ENCODE measurements at regions of chr11 and their contacts with region 1.

Region 1: DNA sequence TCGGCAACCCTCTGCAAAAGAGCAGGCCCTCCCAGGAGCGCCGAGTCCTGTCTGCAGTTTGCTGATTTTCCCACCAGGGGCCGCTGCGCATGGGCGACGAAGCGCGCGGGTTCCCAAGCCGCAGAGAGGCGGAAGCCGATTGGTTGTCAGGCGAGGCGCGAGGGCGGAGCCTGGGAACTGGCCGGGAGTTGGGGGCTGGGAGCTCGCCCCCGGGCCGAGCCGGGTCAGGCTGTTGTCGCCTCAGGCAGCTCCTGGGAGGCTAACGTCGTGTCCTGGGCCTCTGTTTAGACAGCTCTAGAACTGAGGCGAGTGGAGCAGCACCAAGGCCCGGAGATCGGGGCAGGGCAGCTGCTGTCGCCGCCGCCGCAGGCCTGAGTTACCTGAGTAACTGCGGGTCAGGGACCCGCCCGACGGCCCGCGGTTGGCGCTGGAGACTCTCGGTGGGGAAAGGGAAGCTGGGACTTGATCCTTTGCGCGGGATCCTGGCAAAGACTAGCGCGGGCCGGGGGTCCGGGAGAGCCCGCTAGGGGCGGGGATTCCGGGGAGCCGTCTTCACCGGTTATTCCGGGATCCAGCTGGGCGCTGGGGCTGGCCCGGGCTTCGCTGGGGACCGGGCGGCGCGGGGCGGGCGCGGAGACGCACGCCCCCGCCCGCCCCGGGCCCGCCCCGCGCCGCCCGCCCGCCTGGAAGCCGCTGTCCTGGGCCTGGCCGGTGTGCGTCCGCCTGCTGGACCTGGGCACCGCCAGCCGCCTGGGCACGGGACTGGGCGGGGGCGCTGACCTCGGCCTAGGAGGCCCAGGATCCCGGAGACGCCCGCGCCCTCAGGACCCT is at the start of gene STIM1:
- DNase-seq: peak; percentile 99
- H3K4me3 Mint-ChIP-seq: peak within 1 kb of the TSS; percentile 97
- H3K27ac Mint-ChIP-seq: peak within 1 kb of the TSS; percentile 98
- H3K4me1 Mint-ChIP-seq: peaks cover 55% of the 10 kb centered on the region
- H3K27me3 Mint-ChIP-seq: no peaks in the 10 kb centered on the region
- total RNA-seq, gene STIM1: 62.9 to 68.5 TPM

Region 2: DNA sequence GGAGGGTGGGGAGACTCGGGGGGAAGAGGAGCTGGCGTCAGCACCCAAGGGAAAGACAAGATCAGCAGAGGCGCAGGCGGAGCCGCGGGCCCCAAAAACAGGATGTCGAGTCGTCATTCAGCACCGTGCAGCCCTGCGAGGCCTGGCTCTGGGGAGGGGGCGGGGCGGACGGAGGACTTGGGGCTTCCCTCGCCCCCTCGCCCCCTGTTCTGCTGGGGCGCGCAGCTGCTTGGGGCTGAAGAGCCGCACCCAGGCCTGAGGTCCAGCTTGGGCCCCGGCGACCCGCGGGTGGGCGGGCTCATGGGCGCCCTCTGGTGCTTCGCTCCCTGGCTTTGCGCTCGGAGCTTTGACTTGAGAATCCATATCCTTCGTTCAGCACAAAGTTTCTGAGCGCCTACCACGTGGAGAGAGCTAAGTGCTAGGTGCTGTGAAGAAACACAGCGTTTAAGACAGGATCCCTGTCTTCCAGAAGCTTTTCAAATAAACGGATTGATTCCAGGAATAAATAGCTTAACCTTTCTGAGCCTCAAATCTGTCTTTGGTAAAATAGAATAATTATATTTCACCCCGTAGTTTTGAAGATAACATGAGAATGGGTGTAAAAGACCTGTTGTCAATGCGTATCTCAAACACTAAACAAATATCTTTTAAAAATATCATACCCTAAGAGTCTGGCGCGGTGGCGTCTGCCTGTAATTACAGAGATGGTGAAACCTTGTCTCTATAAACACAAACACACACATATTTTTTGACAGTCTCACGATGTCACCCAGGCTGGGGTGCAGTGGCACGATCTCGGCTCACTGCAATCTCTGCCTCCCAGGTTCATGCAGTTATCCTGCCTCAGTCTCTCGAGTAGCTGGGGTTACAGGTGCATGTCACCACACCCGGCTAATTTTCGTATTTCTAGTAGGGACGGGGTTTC is 13.5 kb before region 1 on chr11:
- CTCF ChIA-PET with region 1: interaction called, 231 read pairs
- intact Hi-C with region 1: loop called (anchors 1 kb)
- DNase-seq: peak; percentile 98
- H3K4me3 Mint-ChIP-seq: peak overlapping the region; percentile 85
- H3K27ac Mint-ChIP-seq: peak overlapping the region; percentile 86
- H3K4me1 Mint-ChIP-seq: peaks cover 50% of the 10 kb centered on the region
- H3K27me3 Mint-ChIP-seq: no peaks in the 10 kb centered on the region

Region 3: GRCh38 chr11:3880724-3881123 is 25.5 kb after region 1 on chr11:
- CTCF ChIA-PET with region 1: interaction called, 30 read pairs
- intact Hi-C with region 1: loop called (anchors 1 kb)
- DNase-seq: no peak
- H3K4me3 Mint-ChIP-seq: no peak overlapping the region
- H3K27ac Mint-ChIP-seq: peak overlapping the region; percentile 37
- H3K4me1 Mint-ChIP-seq: peaks cover 77% of the 10 kb centered on the region
- H3K27me3 Mint-ChIP-seq: no peaks in the 10 kb centered on the region

Region 4: DNA sequence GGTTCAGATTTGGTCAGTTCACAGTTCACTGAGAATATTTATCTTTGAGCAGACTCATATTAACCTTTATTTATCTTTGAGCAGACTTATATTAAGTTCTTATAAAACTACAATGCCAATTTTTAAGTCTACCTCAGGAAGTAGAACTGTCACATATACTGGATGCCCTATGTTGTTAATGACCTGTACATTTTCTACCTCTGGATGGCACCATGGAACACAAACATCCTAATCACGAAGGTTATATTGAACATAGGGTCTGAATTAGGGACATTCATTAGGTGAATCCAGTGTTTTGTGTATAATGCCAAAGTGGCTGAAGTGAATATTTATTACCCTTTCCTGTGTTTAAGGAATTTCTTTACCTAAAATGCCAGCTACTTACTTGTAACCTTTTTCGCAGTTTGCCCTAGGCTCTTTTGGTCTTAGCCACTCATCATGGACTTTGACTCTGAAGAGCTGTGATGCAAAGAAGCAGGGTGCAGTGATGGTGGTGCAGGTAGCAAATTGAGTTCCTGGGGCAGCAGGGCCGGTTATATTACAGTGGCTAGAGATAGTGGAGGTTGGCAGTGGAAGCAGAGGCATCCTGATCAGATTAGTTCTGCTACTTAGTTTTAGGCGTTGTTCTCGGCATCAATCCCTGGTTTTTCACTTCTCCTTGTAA is 72.1 kb after region 1 on chr11:
- CTCF ChIA-PET with region 1: interaction called, 10 read pairs
- intact Hi-C with region 1: no loop called
- DNase-seq: no peak
- H3K4me3 Mint-ChIP-seq: no peak overlapping the region
- H3K27ac Mint-ChIP-seq: no peak overlapping the region
- H3K4me1 Mint-ChIP-seq: peaks cover 18% of the 10 kb centered on the region
- H3K27me3 Mint-ChIP-seq: no peaks in the 10 kb centered on the region

Region 5: DNA sequence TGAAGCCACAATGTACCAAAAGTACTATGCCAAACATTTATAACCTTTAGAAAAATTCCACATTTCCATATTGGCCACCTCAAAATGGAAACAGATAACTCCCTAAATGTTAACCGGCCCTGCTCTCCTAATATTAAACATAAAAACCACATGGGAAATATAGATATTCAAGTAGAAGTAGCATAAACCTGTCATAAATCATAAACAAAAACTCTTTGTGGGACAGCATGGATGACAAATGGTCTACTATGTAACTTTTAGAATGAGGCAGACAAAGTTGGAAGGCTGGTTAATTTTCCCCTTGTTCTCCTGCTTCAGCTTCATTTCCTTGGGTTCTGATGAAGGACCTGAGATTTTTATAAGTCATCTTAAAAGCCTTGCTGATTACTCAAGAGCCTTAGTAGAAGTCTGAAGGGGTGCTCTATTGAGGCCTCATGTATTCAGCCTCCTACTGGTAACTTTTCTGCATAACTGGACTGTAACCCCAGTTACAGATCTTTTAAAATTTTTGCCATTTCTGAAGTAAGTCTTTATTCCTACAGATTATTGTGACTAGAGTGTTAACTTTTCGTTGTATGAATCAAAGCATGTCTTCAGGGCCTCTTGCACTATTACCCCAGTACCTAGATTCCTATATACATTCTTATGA is 116.7 kb after region 1 on chr11:
- CTCF ChIA-PET with region 1: interaction called, 26 read pairs
- intact Hi-C with region 1: loop called (anchors 1 kb)
- DNase-seq: no peak
- H3K4me3 Mint-ChIP-seq: no peak overlapping the region
- H3K27ac Mint-ChIP-seq: no peak overlapping the region
- H3K4me1 Mint-ChIP-seq: peaks cover 68% of the 10 kb centered on the region
- H3K27me3 Mint-ChIP-seq: no peaks in the 10 kb centered on the region

Region 6: GRCh38 chr11:3989921-3990290 is 134.7 kb after region 1 on chr11:
- CTCF ChIA-PET with region 1: interaction called, 32 read pairs
- intact Hi-C with region 1: loop called (anchors 1 kb)
- DNase-seq: peak; percentile 38
- H3K4me3 Mint-ChIP-seq: peak overlapping the region; percentile 49
- H3K27ac Mint-ChIP-seq: peak overlapping the region; percentile 63
- H3K4me1 Mint-ChIP-seq: peaks cover 64% of the 10 kb centered on the region
- H3K27me3 Mint-ChIP-seq: no peaks in the 10 kb centered on the region

Region 7: GRCh38 chr11:4094348-4095291 is 239.4 kb after region 1 on chr11 and contains the start of gene RRM1:
- CTCF ChIA-PET with region 1: interaction called, 4 read pairs
- intact Hi-C with region 1: loop called (anchors 1 kb)
- DNase-seq: peak; percentile 96
- H3K4me3 Mint-ChIP-seq: peak within 1 kb of the TSS; percentile 98
- H3K27ac Mint-ChIP-seq: peak within 1 kb of the TSS; percentile 97
- H3K4me1 Mint-ChIP-seq: peaks cover 73% of the 10 kb centered on the region
- H3K27me3 Mint-ChIP-seq: no peaks in the 10 kb centered on the region
- total RNA-seq, gene RRM1: 296 to 311 TPM

Region 8: GRCh38 chr11:4187055-4187988 is 332.1 kb after region 1 on chr11:
- CTCF ChIA-PET with region 1: no interaction called
- intact Hi-C with region 1: no loop called
- DNase-seq: peak; percentile 89
- H3K4me3 Mint-ChIP-seq: peak overlapping the region; percentile 73
- H3K27ac Mint-ChIP-seq: no peak overlapping the region
- H3K4me1 Mint-ChIP-seq: peaks cover 2% of the 10 kb centered on the region
- H3K27me3 Mint-ChIP-seq: peaks cover 9% of the 10 kb centered on the region